ENCODE measurements at regions of chr17 and their contacts with region 1.

Region 1: GRCh38 chr17:45235416-45236281 is 14.0 kb downstream of the FMNL1 start:
- DNase-seq: peak; percentile 69 to 84 (median 70)
- H3K4me3 ChIP-seq: no peak overlapping the region
- H3K4me3 Mint-ChIP-seq: peak overlapping the region in 5 of 7 donors; percentile 24 to 72 (median 30)
- H3K27ac ChIP-seq: no peak overlapping the region
- H3K27ac Mint-ChIP-seq: peak overlapping the region; percentile 79 to 98 (median 90)
- H3K4me1 ChIP-seq: peaks cover 35% of the 10 kb centered on the region
- H3K4me1 Mint-ChIP-seq: peaks cover 54 to 63% (median 59%) of the 10 kb centered on the region in 3 donors
- H3K27me3 ChIP-seq: no peaks in the 10 kb centered on the region
- H3K27me3 Mint-ChIP-seq: no peaks in the 10 kb centered on the region

Region 2: DNA sequence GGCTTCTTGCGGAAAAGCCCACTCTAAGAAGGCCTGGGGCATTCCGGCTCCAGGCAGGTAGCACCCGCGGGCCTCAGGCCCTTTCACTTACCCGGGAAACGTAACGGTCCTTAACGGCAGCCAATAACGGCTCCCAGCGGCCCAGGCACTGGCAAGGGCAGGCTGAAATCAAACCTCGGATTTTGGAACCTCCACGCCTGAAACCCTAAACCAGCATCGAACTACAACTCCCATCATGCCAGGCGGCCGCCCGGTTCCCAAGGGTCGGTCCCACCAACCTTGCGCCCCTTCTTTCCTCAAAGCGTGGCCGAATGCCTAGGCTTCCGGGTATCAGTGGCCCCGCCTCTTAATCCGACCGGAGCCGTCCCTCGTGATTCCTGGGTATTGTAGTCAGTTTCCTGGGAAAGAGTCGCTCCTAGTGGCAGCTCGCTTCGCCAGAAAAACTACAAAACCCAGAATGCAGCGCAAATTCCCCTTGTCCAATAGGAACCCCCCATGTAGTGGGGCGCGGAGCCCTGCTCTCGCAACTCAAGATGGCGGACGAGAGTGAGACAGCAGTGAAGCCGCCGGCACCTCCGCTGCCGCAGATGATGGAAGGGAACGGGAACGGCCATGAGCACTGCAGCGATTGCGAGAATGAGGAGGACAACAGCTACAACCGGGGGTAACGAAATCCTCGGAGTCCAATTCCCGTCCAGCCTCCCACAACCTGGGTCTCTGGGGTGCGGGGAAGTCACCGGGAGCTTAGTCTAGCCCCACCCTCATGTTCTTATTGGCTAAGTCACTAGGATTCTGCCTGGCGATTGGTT is 174.6 kb before region 1 on chr17 and contains the start of gene NMT1:
- CTCF ChIA-PET with region 1: no interaction called
- POLR2A ChIA-PET with region 1: no interaction called
- DNase-seq: peak; percentile 91 to 99 (median 97)
- H3K4me3 ChIP-seq: peak within 1 kb of the TSS; percentile 85
- H3K4me3 Mint-ChIP-seq: peak within 1 kb of the TSS; percentile 95 to 100 (median 99)
- H3K27ac ChIP-seq: peak within 1 kb of the TSS; percentile 84
- H3K27ac Mint-ChIP-seq: peak within 1 kb of the TSS; percentile 92 to 100 (median 99)
- H3K4me1 ChIP-seq: peaks cover 38% of the 10 kb centered on the region
- H3K4me1 Mint-ChIP-seq: peaks cover 35 to 62% (median 53%) of the 10 kb centered on the region in 3 donors
- H3K27me3 ChIP-seq: no peaks in the 10 kb centered on the region
- H3K27me3 Mint-ChIP-seq: peaks cover 0 to 2% of the 10 kb centered on the region in 2 donors
- total RNA-seq, gene NMT1: 189 to 198 TPM

Region 3: GRCh38 chr17:45197555-45198334 is 37.9 kb before region 1 on chr17:
- CTCF ChIA-PET with region 1: interaction called, 10 read pairs
- POLR2A ChIA-PET with region 1: no interaction called
- DNase-seq: peak; percentile 74 to 86 (median 83)
- H3K4me3 ChIP-seq: no peak overlapping the region
- H3K4me3 Mint-ChIP-seq: no peak overlapping the region
- H3K27ac ChIP-seq: no peak overlapping the region
- H3K27ac Mint-ChIP-seq: no peak overlapping the region
- H3K4me1 ChIP-seq: no peaks in the 10 kb centered on the region
- H3K4me1 Mint-ChIP-seq: peaks cover 1 to 5% (median 4%) of the 10 kb centered on the region in 3 donors
- H3K27me3 ChIP-seq: no peaks in the 10 kb centered on the region
- H3K27me3 Mint-ChIP-seq: no peaks in the 10 kb centered on the region

Region 4: GRCh38 chr17:45247429-45248131 is 11.9 kb after region 1 on chr17:
- CTCF ChIA-PET with region 1: interaction called, 74 read pairs
- POLR2A ChIA-PET with region 1: interaction called, 189 read pairs
- DNase-seq: peak; percentile 92 to 99 (median 98)
- H3K4me3 ChIP-seq: peak overlapping the region; percentile 69
- H3K4me3 Mint-ChIP-seq: peak overlapping the region; percentile 85 to 94 (median 88)
- H3K27ac ChIP-seq: peak overlapping the region; percentile 90
- H3K27ac Mint-ChIP-seq: peak overlapping the region; percentile 93 to 100 (median 97)
- H3K4me1 ChIP-seq: peaks cover 56% of the 10 kb centered on the region
- H3K4me1 Mint-ChIP-seq: peaks cover 31 to 71% (median 40%) of the 10 kb centered on the region in 3 donors
- H3K27me3 ChIP-seq: no peaks in the 10 kb centered on the region
- H3K27me3 Mint-ChIP-seq: no peaks in the 10 kb centered on the region

Region 5: DNA sequence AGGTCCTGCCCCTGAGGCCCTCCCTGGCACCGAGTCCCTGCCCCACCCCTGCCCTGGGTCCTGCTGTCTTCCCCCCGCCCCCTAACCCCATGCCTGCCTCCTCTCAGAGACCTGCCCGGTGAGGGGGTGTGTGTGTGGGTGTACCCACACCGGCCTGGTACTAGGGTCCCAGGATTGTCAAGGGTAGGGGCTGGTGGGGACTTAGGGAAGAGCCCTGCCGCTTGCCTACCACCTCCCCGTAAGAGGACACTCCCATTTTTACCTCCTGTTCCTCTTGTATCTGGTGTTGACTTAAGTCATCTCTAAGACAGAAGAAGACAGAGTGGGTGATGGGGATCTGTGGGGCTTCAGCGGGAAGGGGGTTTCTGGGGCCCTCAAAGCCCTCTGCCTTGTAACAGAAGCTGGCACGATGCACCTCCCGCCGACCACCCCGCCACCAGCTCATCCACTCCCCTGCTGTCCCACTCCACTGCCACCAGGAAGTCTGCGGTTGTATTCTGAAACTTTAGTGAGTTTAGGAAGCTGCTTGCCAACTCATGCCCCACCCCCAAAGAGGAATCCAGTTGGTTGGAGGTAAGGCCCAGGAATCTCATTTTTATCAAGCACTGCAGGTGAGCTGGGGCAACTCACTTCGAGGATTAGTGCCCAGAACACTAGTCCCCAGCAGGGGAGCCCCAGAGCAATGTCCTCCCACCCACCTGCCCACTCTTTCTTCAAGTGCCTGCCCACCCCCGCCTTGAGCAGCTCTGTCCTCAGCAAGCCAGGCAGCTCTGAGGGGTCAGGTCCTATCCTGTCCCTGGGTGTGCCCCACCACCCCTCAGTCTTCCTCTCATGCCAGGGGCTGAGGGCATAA is 20.7 kb after region 1 on chr17:
- CTCF ChIA-PET with region 1: interaction called, 23 read pairs
- POLR2A ChIA-PET with region 1: interaction called, 3 read pairs
- DNase-seq: no peak
- H3K4me3 ChIP-seq: no peak overlapping the region
- H3K4me3 Mint-ChIP-seq: peak overlapping the region in 1 of 7 donors; percentile 64
- H3K27ac ChIP-seq: no peak overlapping the region
- H3K27ac Mint-ChIP-seq: peak overlapping the region in 7 of 8 donors; percentile 23 to 81 (median 61)
- H3K4me1 ChIP-seq: peaks cover 45% of the 10 kb centered on the region
- H3K4me1 Mint-ChIP-seq: peaks cover 31 to 55% (median 45%) of the 10 kb centered on the region in 3 donors
- H3K27me3 ChIP-seq: no peaks in the 10 kb centered on the region
- H3K27me3 Mint-ChIP-seq: no peaks in the 10 kb centered on the region

Region 6: GRCh38 chr17:45302649-45303173 is 67.1 kb after region 1 on chr17:
- CTCF ChIA-PET with region 1: no interaction called
- POLR2A ChIA-PET with region 1: no interaction called
- DNase-seq: peak in 1 of 5 donors; percentile 24
- H3K4me3 ChIP-seq: no peak overlapping the region
- H3K4me3 Mint-ChIP-seq: peak overlapping the region in 5 of 7 donors; percentile 10 to 57 (median 41)
- H3K27ac ChIP-seq: no peak overlapping the region
- H3K27ac Mint-ChIP-seq: peak overlapping the region; percentile 35 to 88 (median 68)
- H3K4me1 ChIP-seq: peaks cover 40% of the 10 kb centered on the region
- H3K4me1 Mint-ChIP-seq: peaks cover 67 to 88% (median 87%) of the 10 kb centered on the region in 3 donors
- H3K27me3 ChIP-seq: no peaks in the 10 kb centered on the region
- H3K27me3 Mint-ChIP-seq: peaks cover 0 to 2% of the 10 kb centered on the region in 2 donors

Region 7: DNA sequence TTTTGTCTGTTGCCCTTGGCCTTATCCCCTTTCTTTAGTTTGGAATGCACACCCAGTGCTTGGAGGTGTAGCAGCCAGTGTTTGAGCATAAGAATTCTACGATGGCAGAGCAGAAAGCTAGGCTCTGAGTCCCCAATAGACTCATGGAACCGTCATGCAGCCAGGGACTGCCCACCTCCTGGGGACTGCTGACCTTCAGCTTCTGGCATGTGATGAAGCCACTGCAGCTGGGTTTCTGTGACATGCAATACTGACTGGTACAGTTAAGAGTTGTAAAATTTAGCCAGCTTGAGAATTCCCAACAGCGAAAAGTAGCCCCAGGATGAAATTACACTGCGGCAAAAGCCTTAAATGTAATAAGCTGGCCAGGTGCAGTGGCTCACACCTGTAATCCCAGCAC is 90.2 kb after region 1 on chr17:
- CTCF ChIA-PET with region 1: no interaction called
- POLR2A ChIA-PET with region 1: no interaction called
- DNase-seq: no peak
- H3K4me3 ChIP-seq: no peak overlapping the region
- H3K4me3 Mint-ChIP-seq: no peak overlapping the region
- H3K27ac ChIP-seq: no peak overlapping the region
- H3K27ac Mint-ChIP-seq: no peak overlapping the region
- H3K4me1 ChIP-seq: peaks cover 14% of the 10 kb centered on the region
- H3K4me1 Mint-ChIP-seq: peaks cover 20 to 33% (median 28%) of the 10 kb centered on the region in 3 donors
- H3K27me3 ChIP-seq: no peaks in the 10 kb centered on the region
- H3K27me3 Mint-ChIP-seq: peaks cover 0 to 3% of the 10 kb centered on the region in 2 donors